ENCODE measurements at regions of chr22 and their contacts with region 1.

Region 1: DNA sequence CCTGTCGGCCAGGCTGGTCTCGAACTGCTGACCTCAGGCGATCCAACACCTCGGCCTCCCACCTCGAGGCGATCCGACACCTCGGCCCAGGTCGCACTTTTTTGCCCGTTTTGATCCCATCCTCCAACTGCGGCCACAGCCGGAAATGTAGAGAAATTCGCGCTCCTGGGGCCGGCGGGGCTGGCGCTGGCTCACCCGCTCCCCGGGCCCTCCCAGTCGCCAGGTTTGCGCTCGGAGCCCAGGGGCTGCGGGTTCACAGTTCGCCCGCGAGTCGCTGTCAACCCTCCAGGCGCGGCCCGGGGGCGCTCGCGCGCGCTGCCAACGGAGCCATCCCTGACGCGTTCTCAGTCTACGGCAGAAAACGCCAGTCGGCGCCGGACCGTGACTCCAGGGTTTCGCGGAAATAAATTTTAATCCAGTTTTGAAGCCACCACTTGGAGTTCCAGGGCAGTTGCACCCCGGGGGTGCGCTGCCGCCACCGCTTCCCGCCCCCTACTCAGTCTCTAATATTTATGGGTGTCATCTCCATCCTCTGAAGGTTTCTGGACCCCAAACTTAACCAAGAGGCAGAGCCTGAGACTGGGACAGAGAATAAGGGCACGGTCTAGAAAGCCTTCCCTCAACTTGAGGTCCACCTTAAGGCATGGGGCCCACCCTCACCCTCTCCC is 1.5 kb upstream of the KLHDC7B start:
- DNase-seq: peak; percentile 84
- ATAC-seq: peak; percentile 52 to 67

Region 2: DNA sequence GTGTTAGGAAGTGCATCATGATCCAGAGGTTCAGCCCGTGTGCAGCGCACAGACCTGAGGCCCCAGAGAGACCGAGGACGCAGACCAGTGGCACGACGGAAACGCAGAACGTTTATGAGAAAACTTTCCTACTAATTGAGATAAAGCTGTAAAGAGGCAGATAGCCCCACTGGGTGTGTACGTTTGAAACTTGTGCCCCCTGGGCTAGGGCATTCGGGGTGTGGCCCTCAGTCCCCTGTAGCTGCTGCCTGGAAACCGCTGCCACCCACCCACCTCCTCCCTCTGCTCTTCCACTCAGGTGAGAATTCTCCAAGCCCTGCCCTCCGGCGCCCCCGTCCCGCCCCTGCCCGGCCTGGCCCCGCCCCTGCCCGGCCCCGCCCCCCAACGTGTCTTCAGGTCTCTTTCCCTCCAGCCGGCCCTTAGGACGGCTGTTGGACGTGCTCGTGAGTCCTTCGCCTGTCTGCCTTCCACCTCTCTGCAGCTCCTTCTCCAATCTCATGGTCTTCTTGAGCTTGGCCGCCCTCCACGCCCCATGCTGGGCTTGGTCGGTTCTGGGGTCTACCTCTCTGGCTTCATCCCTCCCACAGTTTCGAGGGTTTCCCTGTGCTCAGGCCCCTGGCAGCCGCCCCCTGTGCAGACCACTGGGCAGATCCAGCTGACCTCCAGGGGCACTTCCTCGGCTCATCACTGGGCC is 68.5 kb after region 1 on chr22:
- intact Hi-C with region 1: loop called in 1 of 2 experiments (anchors 10 kb)
- DNase-seq: no peak
- ATAC-seq: peak; percentile 36 to 56

Measured in left cardiac atrium (tissue), 4 donors.